Colonic mucosa (tissue), 4 donors: ENCODE measurements at regions of chr2 and their contacts with region 1.

Region 1: GRCh38 chr2:102803897-102804217 is 42.0 kb downstream of the TMEM182 start:
- DNase-seq: no peak
- H3K4me3 ChIP-seq: no peak overlapping the region
- H3K27ac ChIP-seq: no peak overlapping the region
- H3K4me1 ChIP-seq: no peaks in the 10 kb centered on the region
- H3K27me3 ChIP-seq: no peaks in the 10 kb centered on the region
- CTCF ChIP-seq: no peak

Region 2: DNA sequence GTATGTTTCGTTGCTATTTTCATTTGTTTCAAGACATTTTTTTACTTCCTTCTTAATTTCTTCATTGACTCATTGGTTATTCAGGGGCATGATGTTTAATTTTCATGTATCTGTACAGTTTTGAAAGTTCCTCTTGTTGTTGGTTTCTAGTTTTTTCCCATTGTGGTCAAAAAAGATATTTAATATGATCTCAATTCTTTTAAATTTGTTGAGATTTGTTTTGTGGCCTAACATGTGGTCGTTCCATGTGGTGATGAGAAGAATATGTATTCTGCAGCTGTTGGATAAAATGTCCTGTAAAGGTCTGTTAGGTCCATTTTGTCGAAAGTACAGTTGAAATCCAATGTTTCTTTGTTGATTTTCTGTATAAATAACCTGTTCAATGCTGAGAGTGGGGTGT is 1216.6 kb before region 1 on chr2:
- intact Hi-C with region 1: no loop called
- DNase-seq: no peak
- H3K4me3 ChIP-seq: no peak overlapping the region
- H3K27ac ChIP-seq: no peak overlapping the region
- H3K4me1 ChIP-seq: no peaks in the 10 kb centered on the region
- H3K27me3 ChIP-seq: no peaks in the 10 kb centered on the region
- CTCF ChIP-seq: no peak

Region 3: GRCh38 chr2:102268510-102269209 is 535.2 kb before region 1 on chr2:
- intact Hi-C with region 1: no loop called
- DNase-seq: no peak
- H3K4me3 ChIP-seq: no peak overlapping the region
- H3K27ac ChIP-seq: no peak overlapping the region
- H3K4me1 ChIP-seq: no peaks in the 10 kb centered on the region
- H3K27me3 ChIP-seq: no peaks in the 10 kb centered on the region
- CTCF ChIP-seq: no peak

Region 4: DNA sequence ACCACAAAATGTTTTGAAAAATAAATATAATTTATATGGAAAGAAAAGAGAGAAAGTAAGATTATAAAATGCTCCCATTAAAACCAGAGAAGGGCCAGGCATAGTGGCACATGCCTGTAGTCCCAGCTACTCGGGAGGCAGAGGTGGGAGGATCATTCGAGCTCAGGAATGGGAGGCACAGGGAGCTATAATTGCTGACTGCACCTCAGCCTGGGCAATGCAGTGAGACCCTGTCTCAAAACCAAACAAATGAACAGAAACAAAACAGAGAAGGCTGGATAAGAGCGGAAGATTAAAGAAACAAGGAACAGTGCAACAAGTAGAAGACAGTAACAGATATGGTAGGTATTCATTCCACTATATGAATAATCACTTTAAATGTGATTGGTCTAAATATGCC is 60.6 kb before region 1 on chr2:
- intact Hi-C with region 1: no loop called
- DNase-seq: no peak
- H3K4me3 ChIP-seq: no peak overlapping the region
- H3K27ac ChIP-seq: no peak overlapping the region
- H3K4me1 ChIP-seq: no peaks in the 10 kb centered on the region
- H3K27me3 ChIP-seq: no peaks in the 10 kb centered on the region
- CTCF ChIP-seq: no peak

Region 5: DNA sequence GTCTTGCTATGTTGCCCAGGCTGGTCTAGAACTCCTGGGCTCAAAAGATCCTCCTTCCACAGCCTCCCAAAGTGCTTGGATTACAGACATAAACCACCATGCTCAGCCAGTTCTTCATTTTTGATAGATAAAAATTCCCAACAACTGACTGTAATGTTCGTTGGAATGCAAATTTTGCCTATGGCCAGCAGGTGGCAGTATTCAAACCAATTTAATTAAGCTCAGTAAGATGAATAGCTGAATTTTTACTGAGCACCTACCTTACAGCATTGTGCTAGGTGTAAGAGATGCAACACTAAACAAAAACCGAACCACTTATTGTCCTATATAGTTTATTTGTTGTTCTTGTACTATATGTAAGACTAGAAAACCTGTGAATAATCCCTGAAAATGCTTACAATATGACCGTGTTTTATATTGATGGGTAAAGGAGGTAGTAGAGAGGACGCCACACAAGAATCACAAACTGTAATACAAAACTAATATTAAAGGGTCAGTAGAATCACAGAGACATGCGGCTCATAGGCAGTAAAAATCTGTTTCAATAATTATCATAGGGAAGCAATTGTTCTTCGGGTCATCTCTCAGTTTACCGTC is 50.2 kb before region 1 on chr2:
- intact Hi-C with region 1: loop called (anchors 2 kb)
- DNase-seq: peak; percentile 25
- H3K4me3 ChIP-seq: no peak overlapping the region
- H3K27ac ChIP-seq: no peak overlapping the region
- H3K4me1 ChIP-seq: no peaks in the 10 kb centered on the region
- H3K27me3 ChIP-seq: no peaks in the 10 kb centered on the region
- CTCF ChIP-seq: peak; percentile 83

Region 6: GRCh38 chr2:103132536-103133217 is 328.8 kb after region 1 on chr2:
- intact Hi-C with region 1: no loop called
- DNase-seq: no peak
- H3K4me3 ChIP-seq: no peak overlapping the region
- H3K27ac ChIP-seq: no peak overlapping the region
- H3K4me1 ChIP-seq: no peaks in the 10 kb centered on the region
- H3K27me3 ChIP-seq: no peaks in the 10 kb centered on the region
- CTCF ChIP-seq: no peak